HEK293T (cell line): ENCODE measurements at regions of chr14 and their contacts with region 1.

Region 1: GRCh38 chr14:102516531-102517415 is 7.2 kb upstream of the ANKRD9 start:
- DNase-seq: peak; percentile 83

Region 2: GRCh38 chr14:102437997-102438915 is 78.5 kb before region 1 on chr14:
- CTCF ChIA-PET with region 1: interaction called, 26 read pairs
- POLR2A ChIA-PET with region 1: interaction called, 4 read pairs
- DNase-seq: peak; percentile 93

Region 3: DNA sequence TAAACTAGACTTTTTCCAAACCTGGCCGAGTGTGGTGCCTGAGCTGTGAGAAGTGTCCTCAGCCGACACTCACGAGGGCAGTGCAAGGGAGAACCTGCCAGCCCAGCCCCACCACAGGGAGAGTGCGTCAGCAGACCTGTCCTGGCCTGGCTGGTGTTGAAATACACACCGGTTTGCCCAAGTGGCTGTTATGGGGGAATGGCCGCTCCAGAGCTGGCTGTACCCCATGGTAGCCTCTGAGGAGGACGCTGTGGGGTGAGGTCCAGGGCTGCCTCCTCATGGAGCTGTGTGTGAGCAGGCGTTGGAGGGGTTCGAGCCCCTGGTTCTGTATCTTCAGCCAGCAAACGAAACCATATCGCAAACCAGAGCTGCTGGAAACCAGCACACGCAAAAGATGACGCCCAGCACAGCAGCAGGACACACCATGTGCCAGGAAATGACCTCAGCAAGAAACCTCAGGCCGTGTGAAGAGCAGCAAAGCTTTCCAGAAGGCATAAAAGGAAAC is 16.6 kb before region 1 on chr14:
- CTCF ChIA-PET with region 1: no interaction called
- POLR2A ChIA-PET with region 1: no interaction called
- DNase-seq: no peak